ENCODE measurements at regions of chr3 and their contacts with region 1.

Region 1: DNA sequence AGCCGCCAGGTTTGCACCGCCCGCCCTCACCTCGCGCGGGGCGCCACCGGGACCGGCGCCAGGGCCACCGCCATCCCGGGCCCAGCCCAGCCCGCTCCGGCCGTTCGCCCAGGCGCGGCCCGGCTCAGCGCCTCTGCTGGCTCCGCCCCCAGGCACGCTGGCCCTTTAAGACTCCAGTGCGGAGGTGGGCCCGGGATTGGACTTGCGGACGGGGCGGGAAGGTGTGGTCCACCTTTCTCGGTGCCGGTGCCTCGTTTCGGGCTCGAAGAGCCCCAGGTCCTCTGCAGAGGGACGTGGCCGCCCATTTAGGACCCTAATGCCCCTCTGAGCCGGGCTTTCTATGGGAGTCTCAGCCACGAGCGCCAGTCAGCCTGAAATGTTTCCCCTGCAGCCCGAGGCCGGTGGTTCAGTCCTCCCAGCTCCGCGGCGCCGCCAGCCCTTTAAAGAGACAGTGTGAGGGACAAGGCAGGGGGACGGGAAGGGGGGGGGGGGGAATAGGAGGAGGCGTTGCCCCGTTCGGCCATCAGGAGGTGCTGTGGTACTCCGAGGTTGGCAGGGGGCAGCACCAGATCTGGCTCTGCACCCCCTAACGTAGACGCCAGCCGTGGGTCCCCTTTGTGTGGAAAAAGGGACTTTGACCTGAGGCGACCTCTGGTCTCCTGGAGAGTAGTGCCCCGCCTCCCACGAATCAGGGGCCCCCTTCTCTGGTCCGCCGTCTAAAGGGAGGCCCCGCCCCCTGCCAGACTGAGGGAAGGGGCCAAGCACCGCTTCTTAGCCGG is 1.0 kb downstream of the HYAL2 start:
- DNase-seq: peak; percentile 90
- ATAC-seq: peak; percentile 71
- H3K4me3 Mint-ChIP-seq: peak overlapping the region; percentile 88
- H3K27ac Mint-ChIP-seq: peak overlapping the region; percentile 97
- H3K4me1 Mint-ChIP-seq: peaks cover 40% of the 10 kb centered on the region
- H3K27me3 Mint-ChIP-seq: no peaks in the 10 kb centered on the region
- CTCF ChIP-seq: peak; percentile 56; the same call in 1 of the 2 replicates

Region 2: DNA sequence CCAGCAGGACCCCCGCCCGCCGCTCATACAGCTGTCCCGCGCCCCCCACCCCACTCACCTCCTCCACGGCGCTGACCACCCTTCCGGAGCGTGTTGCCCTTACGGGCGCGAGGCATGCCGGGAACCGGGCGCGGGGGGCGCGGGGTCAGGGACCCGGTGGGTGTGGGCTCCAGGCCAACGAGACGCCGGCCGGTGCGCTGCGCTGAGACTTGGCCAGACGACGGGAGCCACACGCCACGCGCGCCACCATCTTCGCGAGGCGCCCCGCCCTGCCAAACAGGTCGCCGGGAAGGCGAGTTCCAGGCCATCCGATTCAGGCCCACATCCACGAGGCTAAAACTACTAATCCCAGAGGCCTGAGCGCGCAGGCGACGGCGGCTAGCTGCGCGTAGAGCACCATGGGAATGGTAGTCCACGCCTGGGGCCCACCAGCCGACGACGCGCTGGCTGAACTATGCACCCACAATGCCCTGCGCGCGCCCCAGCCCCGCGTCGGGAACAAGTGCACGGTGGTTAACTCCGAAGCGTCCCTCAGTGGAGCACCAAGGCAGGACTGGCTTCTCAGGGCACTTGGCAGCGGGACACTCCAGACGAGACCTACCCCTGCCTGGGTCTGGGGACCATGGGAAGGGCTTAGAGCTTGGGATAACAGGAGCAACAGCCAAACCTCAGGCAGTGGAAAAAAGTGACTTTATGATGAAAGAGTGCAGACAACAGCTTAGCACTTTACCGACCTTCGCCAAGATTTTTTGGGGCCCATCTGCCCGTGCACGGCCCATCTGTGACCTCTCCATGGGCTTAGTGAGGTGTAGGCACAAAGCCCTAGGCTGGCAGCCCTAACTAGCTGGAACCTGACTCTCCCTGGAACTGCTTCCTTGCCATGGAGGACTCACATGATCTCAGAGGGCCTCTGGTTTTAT is 29.1 kb before region 1 on chr3 and contains the start of gene IFRD2:
- CTCF ChIA-PET with region 1: interaction called, 12 read pairs
- POLR2A ChIA-PET with region 1: no interaction called
- DNase-seq: peak; percentile 97
- ATAC-seq: peak; percentile 96
- H3K4me3 Mint-ChIP-seq: peak within 1 kb of the TSS; percentile 76
- H3K27ac Mint-ChIP-seq: peak within 1 kb of the TSS; percentile 96
- H3K4me1 Mint-ChIP-seq: peaks cover 12% of the 10 kb centered on the region
- H3K27me3 Mint-ChIP-seq: no peaks in the 10 kb centered on the region; the same call in 1 of the 2 replicates
- CTCF ChIP-seq: no peak
- total RNA-seq, gene IFRD2: 63.2 to 92.0 TPM (median 75.6 TPM) in 3 replicates

Region 3: DNA sequence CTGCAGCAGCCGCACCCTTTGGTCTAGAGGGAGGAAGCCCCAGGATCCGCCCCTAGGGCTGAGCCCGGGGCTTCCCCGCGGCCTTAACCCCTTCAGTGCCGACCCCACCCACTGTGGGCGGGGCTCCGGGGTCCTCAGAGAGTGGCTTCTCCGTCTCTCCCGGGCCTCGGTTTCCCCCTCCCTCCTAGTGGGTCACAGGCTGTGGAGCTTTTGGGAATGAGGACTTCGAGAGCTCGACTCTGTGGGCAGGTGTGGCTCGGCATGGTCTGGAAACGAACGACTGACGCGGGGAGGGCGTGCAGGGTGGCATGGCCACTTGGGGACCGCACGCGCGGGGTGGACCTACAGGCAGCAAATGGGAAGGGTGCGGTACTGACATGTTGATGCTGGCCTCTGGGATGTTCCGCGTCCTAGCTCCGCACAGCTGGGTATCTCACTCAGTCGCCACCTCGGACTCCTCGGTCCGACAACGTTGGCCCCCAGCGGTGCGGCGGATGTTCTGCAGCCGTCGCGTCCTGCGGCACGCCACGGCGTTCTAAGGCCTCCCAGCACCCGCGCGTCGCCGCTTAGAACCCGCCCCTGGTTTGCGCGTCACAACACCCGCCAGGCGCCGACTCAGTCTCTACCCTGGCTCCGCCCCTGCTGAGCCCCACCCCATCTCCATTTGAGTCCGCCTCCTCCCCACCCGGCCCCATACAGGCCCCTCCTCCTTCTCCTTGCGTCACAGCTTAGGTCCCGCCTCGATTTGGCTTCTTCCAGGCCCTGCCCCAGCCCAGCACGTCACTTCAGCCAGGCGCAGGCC is 22.5 kb before region 1 on chr3 and contains the starts of genes HYAL3 and NAA80:
- CTCF ChIA-PET with region 1: interaction called, 95 read pairs
- POLR2A ChIA-PET with region 1: interaction called, 5 read pairs
- DNase-seq: peak; percentile 100
- ATAC-seq: peak; percentile 88
- H3K4me3 Mint-ChIP-seq: peak within 1 kb of the TSS; percentile 97
- H3K27ac Mint-ChIP-seq: peak within 1 kb of the TSS; percentile 98
- H3K4me1 Mint-ChIP-seq: peaks cover 22% of the 10 kb centered on the region
- H3K27me3 Mint-ChIP-seq: no peaks in the 10 kb centered on the region; the same call in 1 of the 2 replicates
- CTCF ChIP-seq: no peak; the same call in 1 of the 2 replicates
- total RNA-seq, gene HYAL3: 2.9 to 3.8 TPM (median 3.2 TPM) in 3 replicates
- total RNA-seq, gene NAA80: 13.7 to 17.3 TPM (median 13.7 TPM) in 3 replicates

Region 4: DNA sequence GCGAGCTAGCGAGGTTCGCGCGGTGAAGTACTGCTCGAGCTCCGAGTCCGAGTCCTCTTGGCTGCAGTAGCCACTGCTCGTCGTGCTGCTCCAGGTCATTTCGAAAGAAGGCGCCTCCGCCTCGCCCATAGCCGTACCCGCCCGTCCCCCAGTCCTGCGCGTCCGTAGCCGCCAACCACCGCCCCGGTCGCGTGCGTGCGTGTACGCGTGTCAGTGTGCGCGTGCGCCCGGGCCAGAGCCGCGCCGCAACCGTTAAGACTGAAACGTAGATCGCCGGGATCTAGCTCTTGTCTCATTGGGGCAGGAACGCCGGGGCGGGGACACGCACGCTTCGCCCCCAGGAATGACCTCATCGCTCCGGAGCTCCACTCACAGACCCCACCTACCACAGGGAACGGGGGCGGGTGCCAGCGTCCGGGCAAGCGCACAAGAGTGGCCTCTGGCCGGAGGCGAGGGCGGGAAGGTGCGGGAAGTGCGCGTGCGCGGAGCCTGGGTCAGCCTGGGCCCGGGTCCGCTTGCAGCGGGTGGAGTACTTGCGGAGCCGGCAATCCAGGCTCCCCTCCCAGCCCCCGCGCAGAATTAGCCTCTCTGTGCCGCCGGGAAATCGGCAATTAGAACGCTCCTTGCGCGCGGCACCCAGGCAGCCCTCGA is 15.8 kb after region 1 on chr3:
- CTCF ChIA-PET with region 1: interaction called, 71 read pairs
- POLR2A ChIA-PET with region 1: interaction called, 8 read pairs
- DNase-seq: peak; percentile 99
- ATAC-seq: peak; percentile 91
- H3K4me3 Mint-ChIP-seq: peak overlapping the region; percentile 95
- H3K27ac Mint-ChIP-seq: peak overlapping the region; percentile 98
- H3K4me1 Mint-ChIP-seq: peaks cover 33% of the 10 kb centered on the region
- H3K27me3 Mint-ChIP-seq: peaks cover 43% of the 10 kb centered on the region
- CTCF ChIP-seq: no peak